PC-9 (cell line): ENCODE measurements at regions of chr2 and their contacts with region 1.

Region 1: GRCh38 chr2:126776692-126777619 is 121.0 kb downstream of the GYPC start:
- DNase-seq: peak in 1 of 2 experiments; percentile 52
- H3K4me3 ChIP-seq: no peak overlapping the region
- H3K27ac ChIP-seq: no peak overlapping the region
- H3K4me1 ChIP-seq: no peaks in the 10 kb centered on the region
- H3K27me3 ChIP-seq: peaks cover 84% of the 10 kb centered on the region
- CTCF ChIP-seq: peak; percentile 84

Region 2: GRCh38 chr2:125745514-125745913 is 1031.4 kb before region 1 on chr2:
- CTCF ChIA-PET with region 1: no interaction called
- POLR2A ChIA-PET with region 1: no interaction called
- intact Hi-C with region 1: loop called (anchors 5 kb)
- DNase-seq: peak; percentile 15 to 47
- H3K4me3 ChIP-seq: no peak overlapping the region
- H3K27ac ChIP-seq: no peak overlapping the region
- H3K4me1 ChIP-seq: no peaks in the 10 kb centered on the region
- H3K27me3 ChIP-seq: no peaks in the 10 kb centered on the region
- CTCF ChIP-seq: peak; percentile 57

Region 3: GRCh38 chr2:126244937-126245336 is 532.0 kb before region 1 on chr2:
- CTCF ChIA-PET with region 1: interaction called, 11 read pairs
- POLR2A ChIA-PET with region 1: no interaction called
- intact Hi-C with region 1: no loop called
- DNase-seq: peak in 1 of 2 experiments; percentile 21
- H3K4me3 ChIP-seq: no peak overlapping the region
- H3K27ac ChIP-seq: no peak overlapping the region
- H3K4me1 ChIP-seq: no peaks in the 10 kb centered on the region
- H3K27me3 ChIP-seq: peaks cover 13% of the 10 kb centered on the region
- CTCF ChIP-seq: peak; percentile 63

Region 4: DNA sequence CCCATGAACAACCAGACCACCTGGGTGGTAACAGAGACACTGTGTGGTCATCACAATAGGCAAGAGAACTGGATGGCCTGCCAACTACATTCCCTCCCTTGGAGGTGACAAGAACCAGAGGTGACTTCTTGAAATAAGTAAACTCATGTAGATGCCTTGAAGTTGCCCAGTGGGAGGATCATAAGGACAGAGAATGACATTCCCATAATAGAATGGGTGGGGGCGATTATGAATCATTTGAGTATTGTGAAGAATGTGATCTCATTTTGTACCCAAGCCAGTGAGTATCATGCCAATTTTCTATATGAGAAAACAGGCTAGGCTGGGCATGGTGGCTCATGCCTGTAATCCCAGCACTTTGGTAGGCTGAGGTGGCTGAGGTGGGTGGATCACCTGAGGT is 332.4 kb before region 1 on chr2:
- CTCF ChIA-PET with region 1: no interaction called
- POLR2A ChIA-PET with region 1: no interaction called
- intact Hi-C with region 1: no loop called
- DNase-seq: no peak
- H3K4me3 ChIP-seq: no peak overlapping the region
- H3K27ac ChIP-seq: no peak overlapping the region
- H3K4me1 ChIP-seq: no peaks in the 10 kb centered on the region
- H3K27me3 ChIP-seq: peaks cover 41% of the 10 kb centered on the region
- CTCF ChIP-seq: no peak

Region 5: GRCh38 chr2:126527836-126528507 is 249.0 kb before region 1 on chr2:
- CTCF ChIA-PET with region 1: no interaction called
- POLR2A ChIA-PET with region 1: no interaction called
- intact Hi-C with region 1: loop called (anchors 5 kb)
- DNase-seq: peak; percentile 29 to 43
- H3K4me3 ChIP-seq: no peak overlapping the region
- H3K27ac ChIP-seq: no peak overlapping the region
- H3K4me1 ChIP-seq: no peaks in the 10 kb centered on the region
- H3K27me3 ChIP-seq: no peaks in the 10 kb centered on the region
- CTCF ChIP-seq: peak; percentile 68

Region 6: GRCh38 chr2:127324635-127325034 is 547.7 kb after region 1 on chr2:
- CTCF ChIA-PET with region 1: no interaction called
- POLR2A ChIA-PET with region 1: no interaction called
- intact Hi-C with region 1: no loop called
- DNase-seq: peak; percentile 14 to 62
- H3K4me3 ChIP-seq: no peak overlapping the region
- H3K27ac ChIP-seq: no peak overlapping the region
- H3K4me1 ChIP-seq: no peaks in the 10 kb centered on the region
- H3K27me3 ChIP-seq: no peaks in the 10 kb centered on the region
- CTCF ChIP-seq: peak; percentile 91